Activated CD4-positive, alpha-beta T cell treated with anti-CD3 and anti-CD28 coated beads, Interleukin-2, amount 10 ng/mL, durations not matched to agents 24 days and 14 days (primary cell): ENCODE measurements at regions of chr14 and their contacts with region 1.

Region 1: DNA sequence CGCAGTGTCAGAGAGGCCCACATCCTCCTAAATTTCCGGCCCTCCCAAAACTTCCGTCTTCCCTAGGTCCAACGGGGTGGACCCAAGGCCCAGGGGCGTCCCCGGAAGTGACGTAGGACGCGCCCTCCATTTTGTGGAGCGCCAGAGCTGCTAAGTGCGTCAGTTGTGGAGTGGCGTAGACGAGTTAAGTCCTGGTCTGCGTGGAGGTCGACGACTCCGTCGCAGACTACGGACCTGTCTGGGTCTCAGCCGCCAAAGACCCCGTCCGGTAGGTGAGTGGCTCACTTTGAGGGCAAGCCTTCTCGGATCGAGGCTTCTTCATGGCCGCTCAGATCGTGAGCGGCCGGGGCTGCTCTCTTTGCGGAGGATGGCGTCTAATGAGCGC is at the start of gene SRSF5:
- DNase-seq: peak; percentile 99
- H3K4me3 Mint-ChIP-seq: peak within 1 kb of the TSS; percentile 99
- H3K27ac Mint-ChIP-seq: peak within 1 kb of the TSS; percentile 100
- H3K4me1 Mint-ChIP-seq: peaks cover 56% of the 10 kb centered on the region
- H3K27me3 Mint-ChIP-seq: peaks cover 5% of the 10 kb centered on the region
- total RNA-seq, gene SRSF5: 319 and 322 TPM in 2 replicates

Region 2: DNA sequence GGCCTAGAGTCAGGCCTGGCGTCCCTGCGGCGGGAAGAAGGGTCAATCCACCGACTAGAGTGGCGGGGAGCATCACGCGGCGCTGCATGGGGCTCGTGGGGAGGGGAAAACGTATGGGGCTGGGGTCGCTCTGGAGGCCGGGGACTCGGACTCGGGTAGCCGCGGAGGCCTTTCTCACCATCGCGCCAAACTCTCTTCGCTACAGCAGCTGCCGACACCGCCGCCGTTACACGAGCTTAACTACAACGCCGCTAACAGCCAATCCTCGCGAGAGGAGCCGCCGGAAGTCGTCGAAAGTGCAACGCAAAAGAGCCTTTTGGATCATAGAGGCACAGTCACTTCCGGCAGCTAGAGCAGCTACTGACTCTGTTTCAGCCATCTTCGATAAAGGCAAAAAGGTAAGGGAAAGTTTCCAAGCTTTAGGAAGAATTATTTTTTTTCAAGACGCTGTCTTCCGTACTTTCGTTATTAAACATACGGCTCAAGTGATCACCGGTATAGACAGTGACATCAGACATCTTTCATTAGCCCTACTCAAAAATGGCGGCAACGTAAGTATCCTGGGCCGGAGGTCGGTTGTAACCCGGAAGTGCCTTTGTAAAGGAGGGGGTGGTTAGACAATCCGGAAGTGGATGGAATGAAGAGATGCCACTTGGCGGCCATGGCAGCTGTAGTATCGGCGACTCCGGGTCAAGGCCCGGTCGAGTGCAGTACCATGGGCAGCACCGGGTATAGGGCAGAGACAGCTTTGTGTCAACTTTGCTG is 368.7 kb before region 1 on chr14 and contains the starts of genes ERH and SLC39A9:
- intact Hi-C with region 1: loop called (anchors 1 kb)
- DNase-seq: peak; percentile 98
- H3K4me3 Mint-ChIP-seq: peak within 1 kb of the TSS; percentile 94
- H3K27ac Mint-ChIP-seq: peak within 1 kb of the TSS; percentile 98
- H3K4me1 Mint-ChIP-seq: peaks cover 49% of the 10 kb centered on the region
- H3K27me3 Mint-ChIP-seq: no peaks in the 10 kb centered on the region
- total RNA-seq, gene ERH: 434 and 441 TPM in 2 replicates
- total RNA-seq, gene SLC39A9: 49.5 and 53.4 TPM in 2 replicates

Region 3: GRCh38 chr14:69527635-69528034 is 239.3 kb before region 1 on chr14:
- intact Hi-C with region 1: no loop called
- DNase-seq: no peak
- H3K4me3 Mint-ChIP-seq: no peak overlapping the region
- H3K27ac Mint-ChIP-seq: no peak overlapping the region
- H3K4me1 Mint-ChIP-seq: peaks cover 3% of the 10 kb centered on the region
- H3K27me3 Mint-ChIP-seq: peaks cover 17% of the 10 kb centered on the region

Region 4: GRCh38 chr14:69685716-69686115 is 81.3 kb before region 1 on chr14:
- intact Hi-C with region 1: loop called (anchors 1 kb)
- DNase-seq: peak; percentile 79
- H3K4me3 Mint-ChIP-seq: peak overlapping the region; percentile 75
- H3K27ac Mint-ChIP-seq: peak overlapping the region; percentile 96
- H3K4me1 Mint-ChIP-seq: peaks cover 79% of the 10 kb centered on the region
- H3K27me3 Mint-ChIP-seq: no peaks in the 10 kb centered on the region

Region 5: GRCh38 chr14:69726761-69727511 is 40.0 kb before region 1 on chr14:
- intact Hi-C with region 1: loop called (anchors 5 kb)
- DNase-seq: peak; percentile 96
- H3K4me3 Mint-ChIP-seq: peak overlapping the region; percentile 79
- H3K27ac Mint-ChIP-seq: peak overlapping the region; percentile 79
- H3K4me1 Mint-ChIP-seq: peaks cover 33% of the 10 kb centered on the region
- H3K27me3 Mint-ChIP-seq: peaks cover 7% of the 10 kb centered on the region

Region 6: DNA sequence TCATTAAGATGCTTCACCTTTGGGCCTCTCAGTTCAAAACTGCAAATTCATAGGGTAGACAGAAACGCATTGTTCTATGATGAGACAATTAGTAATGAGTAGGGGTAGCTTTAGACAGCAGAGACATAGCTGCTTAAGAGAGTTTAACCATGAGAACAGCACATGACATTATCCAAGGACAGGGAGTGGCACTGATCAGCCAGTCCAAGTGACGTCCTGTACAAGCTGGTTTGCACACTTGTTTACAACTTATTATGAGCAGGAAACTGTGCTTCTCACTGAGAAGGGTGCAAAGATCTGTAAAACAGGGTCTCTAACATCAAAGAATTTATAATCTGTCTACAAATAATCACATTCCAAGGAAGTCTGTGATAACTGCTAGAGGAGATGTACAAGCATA is 11.2 kb before region 1 on chr14:
- intact Hi-C with region 1: loop called (anchors 1 kb)
- DNase-seq: no peak
- H3K4me3 Mint-ChIP-seq: no peak overlapping the region
- H3K27ac Mint-ChIP-seq: peak overlapping the region; percentile 69
- H3K4me1 Mint-ChIP-seq: peaks cover 12% of the 10 kb centered on the region
- H3K27me3 Mint-ChIP-seq: no peaks in the 10 kb centered on the region

Region 7: GRCh38 chr14:69789118-69789640 is 22.2 kb after region 1 on chr14:
- intact Hi-C with region 1: no loop called
- DNase-seq: no peak
- H3K4me3 Mint-ChIP-seq: no peak overlapping the region
- H3K27ac Mint-ChIP-seq: no peak overlapping the region
- H3K4me1 Mint-ChIP-seq: no peaks in the 10 kb centered on the region
- H3K27me3 Mint-ChIP-seq: no peaks in the 10 kb centered on the region

Region 8: DNA sequence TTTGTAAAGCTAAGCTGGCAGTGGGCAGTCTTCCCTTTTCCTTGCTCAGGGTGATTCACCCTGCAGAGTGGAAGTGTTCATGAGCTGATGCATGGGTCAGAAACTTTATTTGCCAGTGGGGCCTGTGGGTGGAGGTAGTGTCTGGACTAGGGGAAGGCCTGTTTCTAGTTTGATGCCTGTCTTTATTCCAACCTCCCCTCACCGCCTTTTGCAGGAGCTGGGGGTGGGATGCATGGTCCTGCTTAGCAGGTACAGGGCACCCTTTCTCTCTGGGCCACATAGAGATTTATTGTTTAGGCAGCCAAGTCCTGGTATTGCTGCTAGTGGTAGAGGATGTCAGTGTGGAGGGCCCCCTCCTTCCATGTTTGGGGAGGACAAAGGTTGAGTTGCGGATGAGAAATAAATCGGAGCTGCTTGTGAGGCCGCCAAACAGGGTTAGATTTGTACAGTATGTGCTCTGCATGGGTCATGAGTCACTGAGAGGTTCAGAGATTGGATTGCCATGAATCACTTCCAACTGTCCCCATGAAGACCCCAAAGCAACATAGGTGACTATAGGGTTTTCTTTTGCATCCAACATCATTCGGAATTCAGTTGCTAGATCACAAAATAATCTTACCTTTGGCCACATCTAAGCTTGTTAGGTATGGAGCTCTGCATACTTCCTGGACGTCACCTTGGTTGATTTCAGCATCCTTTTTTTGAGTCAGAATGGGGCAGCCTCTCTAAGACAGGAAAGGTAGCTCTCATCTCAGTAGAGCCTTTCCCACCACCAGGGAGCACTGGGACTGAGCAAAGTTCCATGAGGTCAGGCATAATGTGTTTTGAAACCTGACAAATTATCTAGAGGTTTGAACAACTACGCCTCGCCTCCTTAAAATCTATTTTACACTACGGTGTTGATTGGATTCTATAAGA is 121.0 kb after region 1 on chr14:
- intact Hi-C with region 1: no loop called
- DNase-seq: no peak
- H3K4me3 Mint-ChIP-seq: no peak overlapping the region
- H3K27ac Mint-ChIP-seq: no peak overlapping the region
- H3K4me1 Mint-ChIP-seq: no peaks in the 10 kb centered on the region
- H3K27me3 Mint-ChIP-seq: peaks cover 25% of the 10 kb centered on the region